Ovary (tissue), 10 donors: ENCODE measurements at regions of chr14 and their contacts with region 1.

Region 1: DNA sequence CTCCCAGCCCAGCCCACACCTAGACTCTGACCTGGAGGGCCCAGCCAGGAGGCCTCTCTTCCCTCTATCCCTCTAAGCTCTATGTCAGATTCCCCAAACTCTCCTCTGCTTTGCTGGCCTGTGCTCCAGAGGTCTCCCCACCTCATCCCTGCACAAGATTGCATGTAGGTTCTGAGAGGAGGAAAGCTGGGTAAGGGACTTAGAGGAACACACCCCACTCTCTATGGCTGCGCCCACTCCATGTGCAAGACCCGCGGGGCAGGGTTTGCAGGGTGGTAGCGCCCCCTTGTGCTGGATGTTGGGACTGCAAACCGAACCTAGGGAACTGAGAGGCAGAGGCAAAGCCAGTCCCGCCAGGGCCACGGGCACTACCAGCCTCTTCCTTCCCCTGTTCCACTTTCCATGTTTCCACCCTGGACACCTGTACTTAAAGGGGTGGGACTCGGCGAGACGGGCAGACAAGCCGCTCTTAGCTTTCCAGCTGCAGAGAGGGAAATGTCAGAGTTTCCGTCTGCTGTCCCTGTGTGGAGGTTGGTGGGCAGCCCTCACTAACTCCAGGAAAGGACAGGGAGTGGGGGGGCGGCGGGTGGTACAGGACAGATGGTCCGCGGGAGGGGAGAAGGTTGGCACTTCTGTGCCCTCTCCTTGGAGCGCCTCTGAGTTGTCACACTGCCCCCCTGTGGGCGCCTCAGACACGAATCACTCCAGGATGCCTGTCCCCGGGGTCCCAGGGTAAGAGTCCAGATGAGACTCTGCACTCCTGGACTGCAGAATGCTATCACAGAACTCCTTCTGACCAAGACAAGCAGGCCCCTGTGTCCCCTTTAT is 16.8 kb downstream of the MMP14 start:
- DNase-seq: peak; percentile 86 to 97 (median 94)
- H3K4me3 ChIP-seq: peak overlapping the region; percentile 31
- H3K27ac ChIP-seq: peak overlapping the region in 1 of 2 donors; percentile 20
- H3K4me1 ChIP-seq: peaks cover 23% of the 10 kb centered on the region
- H3K27me3 ChIP-seq: no peaks in the 10 kb centered on the region
- CTCF ChIP-seq: peak; percentile 80 to 98 (median 97)
- EP300 ChIP-seq: no peak
- POLR2A ChIP-seq: peak; percentile 24

Region 2: GRCh38 chr14:22556990-22557623 is 296.0 kb before region 1 on chr14:
- intact Hi-C with region 1: loop called in 2 of 4 experiments (anchors 10 kb)
- DNase-seq: peak; percentile 79 to 88 (median 87)
- H3K4me3 ChIP-seq: peak overlapping the region; percentile 29
- H3K27ac ChIP-seq: no peak overlapping the region
- H3K4me1 ChIP-seq: no peaks in the 10 kb centered on the region
- H3K27me3 ChIP-seq: no peaks in the 10 kb centered on the region
- CTCF ChIP-seq: peak; percentile 94 to 99 (median 97)
- EP300 ChIP-seq: no peak
- POLR2A ChIP-seq: no peak

Region 3: GRCh38 chr14:22822571-22823098 is 30.5 kb before region 1 on chr14:
- intact Hi-C with region 1: loop called in 2 of 4 experiments (anchors 2 to 5 kb)
- DNase-seq: peak; percentile 78 to 88 (median 84)
- H3K4me3 ChIP-seq: peak overlapping the region; percentile 50
- H3K27ac ChIP-seq: peak overlapping the region in 1 of 2 donors; percentile 25
- H3K4me1 ChIP-seq: peaks cover 4% of the 10 kb centered on the region
- H3K27me3 ChIP-seq: no peaks in the 10 kb centered on the region
- CTCF ChIP-seq: peak; percentile 76 to 84 (median 80)
- EP300 ChIP-seq: no peak
- POLR2A ChIP-seq: no peak

Region 4: GRCh38 chr14:22836301-22837113 is 16.6 kb before region 1 on chr14 and contains the start of gene MMP14:
- intact Hi-C with region 1: loop called in 2 of 4 experiments (anchors 2 kb)
- DNase-seq: peak; percentile 80 to 86 (median 85)
- H3K4me3 ChIP-seq: peak within 1 kb of the TSS; percentile 96
- H3K27ac ChIP-seq: peak within 1 kb of the TSS; percentile 74 to 96
- H3K4me1 ChIP-seq: peaks cover 8% of the 10 kb centered on the region
- H3K27me3 ChIP-seq: no peaks in the 10 kb centered on the region
- CTCF ChIP-seq: peak in 2 of 3 donors; percentile 41 to 55
- EP300 ChIP-seq: no peak
- POLR2A ChIP-seq: peak; percentile 73
- total RNA-seq, gene MMP14: 70.0 to 267 (median 174) TPM

Region 5: DNA sequence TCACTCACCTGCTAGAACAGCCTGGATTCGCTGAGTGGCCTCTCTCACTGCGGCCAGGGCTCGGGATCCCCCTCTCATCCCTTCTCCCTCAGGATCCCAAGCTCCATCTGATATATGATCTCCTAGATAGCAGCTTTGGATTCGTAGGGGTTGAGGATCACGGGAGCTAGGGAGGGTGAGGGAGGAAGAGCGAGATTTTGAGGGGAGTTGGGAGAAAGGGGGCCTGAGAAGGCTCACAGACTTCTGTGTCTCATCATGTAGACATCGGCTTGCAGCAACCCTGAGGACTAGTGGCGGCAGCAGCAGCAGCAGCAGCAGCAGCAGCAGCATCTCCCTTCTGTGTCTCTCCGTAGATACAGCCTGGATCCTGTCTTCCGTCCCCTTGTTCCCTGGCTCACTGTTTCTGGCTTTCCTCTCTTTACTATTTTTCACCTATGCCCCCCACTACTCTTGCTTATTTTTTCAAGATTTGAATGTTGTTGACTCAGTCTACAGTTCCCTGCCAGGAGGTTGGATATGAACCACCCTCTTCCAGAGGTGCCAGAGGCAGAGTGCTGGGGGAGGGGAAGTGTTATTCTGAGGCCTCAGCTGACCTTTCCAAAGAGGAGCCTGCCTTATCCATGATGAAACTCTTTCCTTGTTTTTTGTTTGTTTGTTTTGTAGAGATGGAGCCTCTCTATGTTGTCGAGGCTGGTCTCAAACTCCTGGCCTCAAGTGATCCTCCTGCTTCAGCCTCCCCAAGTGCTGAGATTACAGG is 251.6 kb after region 1 on chr14 and contains the start of gene CIROP:
- intact Hi-C with region 1: no loop called
- DNase-seq: no peak
- H3K4me3 ChIP-seq: no peak within 1 kb of the TSS
- H3K27ac ChIP-seq: no peak within 1 kb of the TSS
- H3K4me1 ChIP-seq: no peaks in the 10 kb centered on the region
- H3K27me3 ChIP-seq: no peaks in the 10 kb centered on the region
- CTCF ChIP-seq: no peak
- EP300 ChIP-seq: no peak
- POLR2A ChIP-seq: no peak
- total RNA-seq, gene CIROP: not detected

Region 6: GRCh38 chr14:23186913-23187654 is 333.9 kb after region 1 on chr14:
- intact Hi-C with region 1: no loop called
- DNase-seq: peak in 2 of 5 donors; percentile 37 to 75
- H3K4me3 ChIP-seq: no peak overlapping the region
- H3K27ac ChIP-seq: no peak overlapping the region
- H3K4me1 ChIP-seq: peaks cover 1% of the 10 kb centered on the region
- H3K27me3 ChIP-seq: no peaks in the 10 kb centered on the region
- CTCF ChIP-seq: peak; percentile 83 to 97 (median 97)
- EP300 ChIP-seq: no peak
- POLR2A ChIP-seq: no peak